ENCODE measurements at regions of chrX and their contacts with region 1.

Region 1: GRCh38 chrX:40539214-40540142 is 41.3 kb upstream of the ATP6AP2 start:
- DNase-seq: peak; percentile 77
- ATAC-seq: peak; percentile 86

Region 2: GRCh38 chrX:39953883-39954282 is 585.6 kb before region 1 on chrX:
- intact Hi-C with region 1: no loop called
- DNase-seq: peak; percentile 83
- ATAC-seq: peak; percentile 93

Region 3: GRCh38 chrX:40468033-40468846 is 71.2 kb before region 1 on chrX:
- intact Hi-C with region 1: no loop called
- DNase-seq: no peak
- ATAC-seq: peak; percentile 96

Region 4: DNA sequence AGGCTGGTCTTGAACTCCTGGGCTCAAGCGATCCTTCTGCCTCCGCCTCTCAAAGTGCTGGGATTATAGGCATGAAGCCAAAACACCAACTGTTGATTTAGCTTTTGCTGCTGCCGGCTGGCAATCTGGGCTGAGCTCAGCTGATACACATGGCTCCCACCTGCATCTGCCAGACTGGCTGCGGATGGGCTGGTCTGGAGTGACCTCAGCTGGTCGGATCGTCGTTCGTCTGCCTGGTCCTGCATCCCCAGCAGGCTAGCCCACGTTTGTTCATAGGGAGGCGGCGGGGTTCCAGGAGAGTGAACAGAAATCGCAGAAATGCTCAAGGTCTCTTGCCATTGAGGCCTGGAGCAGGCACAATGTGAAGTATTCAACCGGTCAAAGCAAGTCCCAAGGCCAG is 720.0 kb after region 1 on chrX:
- intact Hi-C with region 1: loop called (anchors 10 kb)
- DNase-seq: no peak
- ATAC-seq: no peak